Right ventricle myocardium inferior (tissue), 1 donor: ENCODE measurements at regions of chr10 and their contacts with region 1.

Region 1: DNA sequence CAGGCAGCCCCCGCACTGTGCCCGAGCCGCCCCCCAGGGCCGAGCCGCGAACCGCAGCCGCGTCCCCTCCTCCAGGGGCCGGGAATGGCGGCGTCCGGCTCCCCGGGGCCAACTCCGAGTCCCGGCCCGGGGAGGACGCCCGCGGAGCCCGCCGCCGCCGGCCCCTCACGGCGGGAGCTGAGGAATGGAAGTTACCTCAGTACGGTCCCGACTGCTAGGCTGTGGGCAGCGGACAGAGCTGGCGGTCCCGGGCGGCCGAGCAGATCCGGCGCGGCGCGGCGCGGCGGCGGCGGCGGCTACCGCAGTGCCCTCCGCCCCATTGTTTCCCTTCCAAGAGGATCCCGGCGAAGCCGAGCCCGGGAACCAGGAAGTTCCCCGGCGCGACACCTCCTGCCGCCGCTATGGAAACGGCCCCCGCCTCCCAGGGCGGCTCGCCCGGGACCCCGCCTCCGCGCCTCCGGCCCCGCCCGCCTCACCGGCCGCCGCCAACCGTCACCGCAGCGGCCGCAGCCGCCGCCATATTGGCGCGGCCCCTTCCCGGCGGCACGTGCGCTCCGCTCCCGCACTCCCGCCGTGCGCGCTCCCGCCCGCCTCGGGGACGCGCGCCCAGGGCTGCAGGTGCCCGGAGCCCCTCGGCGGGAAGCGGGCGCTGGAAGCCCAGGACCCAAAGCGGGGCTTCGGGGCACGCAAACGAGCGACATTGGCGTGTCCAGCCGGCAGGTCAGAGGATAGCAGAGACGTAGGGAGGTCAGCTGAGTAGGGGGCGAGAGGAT is at the start of gene USP6NL:
- DNase-seq: peak; percentile 95
- ATAC-seq: peak; percentile 98
- total RNA-seq, gene USP6NL: 6.4 TPM

Region 2: GRCh38 chr10:11180228-11180627 is 431.2 kb before region 1 on chr10:
- intact Hi-C with region 1: no loop called
- DNase-seq: no peak
- ATAC-seq: no peak

Region 3: DNA sequence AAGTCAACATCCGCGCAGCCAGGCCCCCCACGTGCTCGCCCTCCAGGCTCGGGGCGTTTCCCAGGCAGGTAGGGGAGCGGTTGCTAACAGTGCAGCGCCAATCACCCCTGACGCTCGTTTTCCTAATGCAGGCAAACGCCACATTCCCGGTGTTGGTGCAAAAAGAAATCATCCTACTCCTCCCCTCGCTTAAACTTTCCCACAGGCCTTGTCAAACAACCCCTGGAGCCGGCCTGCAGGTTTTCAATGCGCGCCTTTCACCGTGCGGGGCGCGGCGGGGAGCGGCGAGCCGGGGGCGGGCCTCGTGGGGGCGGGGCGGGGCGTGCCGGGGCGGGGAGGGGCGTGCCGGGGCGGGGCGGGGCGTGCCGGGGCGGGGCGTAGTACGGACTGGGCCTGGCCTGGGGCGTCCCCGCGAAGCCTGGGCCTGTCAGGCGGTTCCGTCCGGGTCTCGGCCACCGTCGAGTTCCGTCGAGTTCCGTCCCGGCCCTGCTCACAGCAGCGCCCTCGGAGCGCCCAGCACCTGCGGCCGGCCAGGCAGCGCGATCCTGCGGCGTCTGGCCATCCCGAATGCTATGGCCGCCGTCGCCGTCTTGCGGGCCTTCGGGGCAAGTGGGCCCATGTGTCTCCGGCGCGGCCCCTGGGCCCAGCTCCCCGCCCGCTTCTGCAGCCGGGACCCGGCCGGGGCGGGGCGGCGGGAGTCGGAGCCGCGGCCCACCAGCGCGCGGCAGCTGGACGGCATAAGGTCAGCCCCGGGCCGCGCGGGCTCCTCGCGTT is 130.8 kb after region 1 on chr10 and contains the start of gene ECHDC3:
- intact Hi-C with region 1: loop called (anchors 5 kb)
- DNase-seq: peak; percentile 90
- ATAC-seq: peak; percentile 86
- total RNA-seq, gene ECHDC3: 101 TPM

Region 4: DNA sequence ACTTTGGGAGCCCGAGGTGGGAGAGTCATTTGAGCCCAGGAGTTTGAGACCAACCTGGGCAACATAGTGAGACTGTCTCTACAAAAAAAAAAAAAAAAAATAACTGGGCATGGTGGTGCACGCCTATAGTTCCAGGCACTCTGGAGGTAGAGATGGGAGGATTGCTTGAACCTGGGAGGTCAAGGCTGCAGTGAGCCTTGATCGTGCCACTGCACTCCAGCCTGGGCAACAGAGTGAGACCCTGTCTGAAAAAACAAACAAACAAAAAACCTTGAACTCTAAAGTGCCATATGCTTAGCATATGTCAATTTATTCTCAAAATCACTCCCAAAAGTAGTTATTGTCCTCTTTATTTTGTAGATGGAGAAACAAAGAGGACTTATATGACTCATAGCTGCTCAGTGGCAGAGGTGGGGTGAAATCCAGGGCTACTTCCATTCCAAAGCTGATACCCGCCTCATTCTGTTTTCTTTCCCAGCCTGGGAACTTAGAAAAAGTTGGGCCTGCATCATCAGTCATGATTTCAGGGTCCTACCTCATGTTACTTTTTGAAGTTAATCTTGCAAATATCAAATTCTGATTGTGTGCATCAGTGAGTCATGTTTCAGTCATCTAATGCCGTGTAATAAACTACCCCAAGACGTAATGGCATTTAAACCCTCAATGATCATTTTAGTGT is 470.6 kb after region 1 on chr10:
- intact Hi-C with region 1: no loop called
- DNase-seq: no peak
- ATAC-seq: no peak